Right lobe of liver (tissue), 6 donors: ENCODE measurements at regions of chr1 and their contacts with region 1.

Region 1: GRCh38 chr1:159214149-159214760 is 9.6 kb downstream of the ACKR1 start:
- DNase-seq: no peak
- ATAC-seq: peak; percentile 84 to 91 (median 89)
- H3K4me3 ChIP-seq: no peak overlapping the region
- H3K27ac ChIP-seq: no peak overlapping the region
- H3K4me1 ChIP-seq: no peaks in the 10 kb centered on the region
- H3K27me3 ChIP-seq: no peaks in the 10 kb centered on the region
- CTCF ChIP-seq: peak; percentile 73 to 93 (median 92)
- POLR2A ChIP-seq: no peak

Region 2: DNA sequence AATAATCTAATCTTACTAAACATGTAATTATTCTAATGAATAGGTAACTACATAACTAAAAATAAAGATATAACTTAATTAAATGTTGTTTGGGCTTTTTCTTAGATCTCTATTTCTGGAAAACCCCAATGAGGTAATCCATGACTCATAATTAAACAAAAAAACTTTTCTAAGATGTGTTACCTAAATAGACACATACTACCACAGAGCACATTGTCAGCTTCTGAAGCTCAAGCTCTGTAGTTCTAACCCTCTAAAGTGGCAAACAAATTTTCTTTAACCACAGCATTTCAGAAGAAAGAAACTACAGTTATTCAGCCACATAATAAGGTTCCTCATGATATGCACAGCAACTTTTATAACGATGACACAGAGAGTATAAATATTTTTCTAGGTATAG is 497.9 kb before region 1 on chr1:
- intact Hi-C with region 1: no loop called
- DNase-seq: no peak
- ATAC-seq: no peak
- H3K4me3 ChIP-seq: no peak overlapping the region
- H3K27ac ChIP-seq: no peak overlapping the region
- H3K4me1 ChIP-seq: no peaks in the 10 kb centered on the region
- H3K27me3 ChIP-seq: no peaks in the 10 kb centered on the region
- CTCF ChIP-seq: no peak
- POLR2A ChIP-seq: no peak

Region 3: GRCh38 chr1:159161001-159161718 is 53.1 kb before region 1 on chr1:
- intact Hi-C with region 1: loop called in 1 of 2 experiments (anchors 10 kb)
- DNase-seq: peak; percentile 62 to 75 (median 69)
- ATAC-seq: peak; percentile 100
- H3K4me3 ChIP-seq: no peak overlapping the region
- H3K27ac ChIP-seq: no peak overlapping the region
- H3K4me1 ChIP-seq: peaks cover 0 to 4% (median 0%) of the 10 kb centered on the region in 4 donors
- H3K27me3 ChIP-seq: no peaks in the 10 kb centered on the region
- CTCF ChIP-seq: peak; percentile 88 to 97 (median 96)
- POLR2A ChIP-seq: no peak